ENCODE measurements at regions of chr16 and their contacts with region 1.

Region 1: GRCh38 chr16:69123910-69124309 is 8.5 kb downstream of the CHTF8 start:
- DNase-seq: peak; percentile 68
- H3K4me3 ChIP-seq: no peak overlapping the region
- H3K27ac ChIP-seq: no peak overlapping the region
- H3K4me1 ChIP-seq: peaks cover 3% of the 10 kb centered on the region
- H3K27me3 ChIP-seq: no peaks in the 10 kb centered on the region
- CTCF ChIP-seq: peak; percentile 49
- POLR2A ChIP-seq: peak; percentile 26

Region 2: GRCh38 chr16:68528686-68529379 is 595.1 kb before region 1 on chr16:
- CTCF ChIA-PET with region 1: interaction called, 7 read pairs
- POLR2A ChIA-PET with region 1: no interaction called
- dilution Hi-C with region 1: no loop called
- intact Hi-C with region 1: loop called (anchors 2 kb)
- DNase-seq: peak; percentile 77
- H3K4me3 ChIP-seq: no peak overlapping the region
- H3K27ac ChIP-seq: no peak overlapping the region
- H3K4me1 ChIP-seq: peaks cover 10% of the 10 kb centered on the region
- H3K27me3 ChIP-seq: peaks cover 2 to 3% of the 10 kb centered on the region in 2 experiments
- CTCF ChIP-seq: peak; percentile 88 to 96
- POLR2A ChIP-seq: no peak

Region 3: GRCh38 chr16:68658258-68659008 is 465.5 kb before region 1 on chr16:
- CTCF ChIA-PET with region 1: no interaction called
- POLR2A ChIA-PET with region 1: no interaction called
- dilution Hi-C with region 1: no loop called
- intact Hi-C with region 1: no loop called
- DNase-seq: no peak
- H3K4me3 ChIP-seq: no peak overlapping the region
- H3K27ac ChIP-seq: no peak overlapping the region
- H3K4me1 ChIP-seq: no peaks in the 10 kb centered on the region
- H3K27me3 ChIP-seq: no peaks in the 10 kb centered on the region
- CTCF ChIP-seq: no peak
- POLR2A ChIP-seq: no peak

Region 4: GRCh38 chr16:68704232-68704867 is 419.6 kb before region 1 on chr16:
- CTCF ChIA-PET with region 1: no interaction called
- POLR2A ChIA-PET with region 1: no interaction called
- dilution Hi-C with region 1: no loop called
- intact Hi-C with region 1: loop called (anchors 1 kb)
- DNase-seq: peak; percentile 52
- H3K4me3 ChIP-seq: no peak overlapping the region
- H3K27ac ChIP-seq: no peak overlapping the region
- H3K4me1 ChIP-seq: peaks cover 3% of the 10 kb centered on the region
- H3K27me3 ChIP-seq: no peaks in the 10 kb centered on the region
- CTCF ChIP-seq: peak; percentile 78 to 85
- POLR2A ChIP-seq: no peak

Region 5: GRCh38 chr16:68902008-68902968 is 221.6 kb before region 1 on chr16:
- CTCF ChIA-PET with region 1: interaction called, 107 read pairs
- POLR2A ChIA-PET with region 1: no interaction called
- dilution Hi-C with region 1: no loop called
- intact Hi-C with region 1: loop called (anchors 1 kb)
- DNase-seq: peak; percentile 77
- H3K4me3 ChIP-seq: no peak overlapping the region
- H3K27ac ChIP-seq: no peak overlapping the region
- H3K4me1 ChIP-seq: no peaks in the 10 kb centered on the region
- H3K27me3 ChIP-seq: no peaks in the 10 kb centered on the region
- CTCF ChIP-seq: peak; percentile 61 to 73
- POLR2A ChIP-seq: no peak

Region 6: DNA sequence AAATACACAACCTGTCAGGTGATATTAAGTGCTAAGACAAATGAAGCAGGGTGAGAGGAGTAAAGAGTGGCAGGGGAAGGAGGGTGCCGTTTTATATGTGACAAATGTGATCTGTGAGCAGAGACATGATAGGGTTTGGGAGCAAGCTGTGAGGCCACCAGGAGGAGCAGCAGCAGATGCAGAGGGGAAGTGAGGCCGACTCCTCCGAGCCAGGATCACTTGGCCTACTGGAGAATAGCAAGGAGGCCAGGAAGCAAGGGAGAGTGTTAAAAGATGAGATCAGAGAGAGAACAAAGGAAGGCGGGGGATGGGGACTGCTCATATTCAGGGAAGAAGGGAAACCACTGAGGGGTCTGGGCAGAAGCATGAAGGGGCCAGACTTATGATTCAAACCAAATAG is 151.2 kb before region 1 on chr16:
- CTCF ChIA-PET with region 1: interaction called, 6 read pairs
- POLR2A ChIA-PET with region 1: no interaction called
- dilution Hi-C with region 1: no loop called
- intact Hi-C with region 1: loop called (anchors 1 kb)
- DNase-seq: peak; percentile 81
- H3K4me3 ChIP-seq: no peak overlapping the region
- H3K27ac ChIP-seq: peak overlapping the region; percentile 71
- H3K4me1 ChIP-seq: peaks cover 13% of the 10 kb centered on the region
- H3K27me3 ChIP-seq: no peaks in the 10 kb centered on the region
- CTCF ChIP-seq: peak; percentile 44 to 54
- POLR2A ChIP-seq: no peak

Region 7: DNA sequence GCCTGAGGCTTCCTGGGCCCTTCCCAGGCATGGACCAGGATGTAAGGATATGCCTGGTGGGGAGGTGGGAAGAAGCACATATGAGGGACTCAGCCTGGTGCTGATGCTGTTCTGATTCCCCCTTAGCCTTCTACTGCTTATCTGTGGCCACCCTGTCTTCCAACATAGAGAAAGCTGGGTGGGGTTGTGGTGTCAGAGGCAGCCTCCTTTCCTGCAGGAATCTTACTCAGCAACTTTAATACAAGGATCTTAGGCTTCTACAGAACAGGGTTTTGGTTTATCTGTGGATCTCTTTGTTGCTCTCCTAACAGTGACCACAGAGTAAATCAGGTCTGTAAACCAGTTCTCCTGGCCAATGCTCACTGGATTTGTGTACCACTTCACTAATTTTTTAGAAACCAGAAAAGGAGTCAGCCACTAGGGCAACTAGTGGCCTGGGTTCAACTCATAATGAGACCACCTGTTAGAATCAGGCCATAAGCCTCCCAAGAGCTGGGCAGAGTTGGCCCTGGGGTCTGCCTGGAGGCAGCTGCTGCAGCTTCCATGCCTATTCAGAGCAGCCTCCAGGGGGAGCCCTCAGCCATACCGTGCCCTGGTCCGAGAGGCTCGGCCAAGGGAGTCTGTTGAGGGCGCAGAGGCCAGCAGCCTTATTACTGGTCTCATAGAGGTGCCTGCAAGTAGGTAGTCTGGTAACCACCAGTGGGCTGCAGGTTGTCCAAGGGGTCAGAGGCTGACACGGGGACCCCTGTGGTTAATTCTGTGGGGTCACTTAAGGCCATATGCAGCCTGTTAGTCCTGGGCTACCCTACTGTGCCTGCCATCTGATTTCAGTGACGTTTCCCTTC is 11.4 kb before region 1 on chr16:
- CTCF ChIA-PET with region 1: interaction called, 45 read pairs
- POLR2A ChIA-PET with region 1: no interaction called
- dilution Hi-C with region 1: no loop called
- intact Hi-C with region 1: loop called (anchors 1 kb)
- DNase-seq: peak; percentile 52
- H3K4me3 ChIP-seq: no peak overlapping the region
- H3K27ac ChIP-seq: no peak overlapping the region
- H3K4me1 ChIP-seq: peaks cover 18% of the 10 kb centered on the region
- H3K27me3 ChIP-seq: no peaks in the 10 kb centered on the region
- CTCF ChIP-seq: peak; percentile 90
- POLR2A ChIP-seq: no peak

Measured in endothelial cell of umbilical vein (primary cell).